GM12878 (cell line): ENCODE measurements at regions of chr6 and their contacts with region 1.

Region 1: DNA sequence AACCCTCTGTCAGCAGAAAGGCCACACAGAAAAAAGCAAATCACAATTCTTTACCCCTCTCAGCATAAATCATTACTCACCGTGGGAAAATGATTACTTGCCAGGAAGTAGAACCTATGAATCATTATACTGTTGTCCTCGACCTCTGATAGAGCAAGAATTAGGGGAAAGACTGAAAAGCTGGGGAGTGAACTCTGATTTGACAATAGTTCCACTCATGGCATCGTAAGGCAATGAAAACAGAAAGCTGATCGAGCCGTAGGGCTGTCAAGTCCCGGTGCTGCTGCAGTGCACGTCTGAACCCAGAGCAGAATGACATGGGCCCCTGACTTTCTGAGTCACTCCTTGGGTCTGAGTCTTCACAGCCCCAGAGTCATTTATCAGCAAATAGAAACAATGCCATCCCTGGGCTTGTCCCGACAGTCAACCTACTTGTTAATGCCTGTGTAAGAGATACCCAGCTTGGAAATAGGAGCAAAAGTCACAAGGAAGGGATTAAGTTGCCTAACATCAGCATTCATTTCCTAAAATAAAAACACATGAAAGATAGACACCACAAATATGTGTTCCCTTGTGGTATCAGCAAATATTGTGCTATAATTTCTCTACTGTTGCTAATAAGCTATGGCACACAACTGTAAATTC is 224.8 kb upstream of the MARCKS start:
- DNase-seq: peak; percentile 91
- ATAC-seq: peak; percentile 54
- H3K4me3 ChIP-seq: peak overlapping the region; percentile 19; the same call in 1 of the 2 replicates
- H3K27ac ChIP-seq: peak overlapping the region; percentile 100
- H3K4me1 ChIP-seq: peaks cover 77% of the 10 kb centered on the region
- H3K27me3 ChIP-seq: no peaks in the 10 kb centered on the region
- CTCF ChIP-seq: no peak
- EP300 ChIP-seq: 0 out of 4 replicates have a peak, but pooled peaks of 1 of the 2 experiments have one; percentile 50
- POLR2A ChIP-seq: peak; percentile 88
- RAD21 ChIP-seq: 0 out of 2 replicates have a peak, but pooled peaks have one; percentile 1

Region 2: GRCh38 chr6:111727802-111728201 is 1904.5 kb before region 1 on chr6:
- CTCF ChIA-PET with region 1: no interaction called
- POLR2A ChIA-PET with region 1: no interaction called
- RAD21 ChIA-PET with region 1: no interaction called
- SMC1A ChIA-PET with region 1: no interaction called
- in situ Hi-C with region 1: loop called (anchors 25 kb)
- intact Hi-C with region 1: no loop called
- DNase-seq: no peak
- ATAC-seq: no peak
- H3K4me3 ChIP-seq: no peak overlapping the region
- H3K27ac ChIP-seq: no peak overlapping the region
- H3K4me1 ChIP-seq: peaks cover 48% of the 10 kb centered on the region
- H3K27me3 ChIP-seq: no peaks in the 10 kb centered on the region
- CTCF ChIP-seq: peak in 2 of 3 experiments; percentile 11 to 38; a peak in 1 of 6 replicates
- EP300 ChIP-seq: no peak
- POLR2A ChIP-seq: no peak
- RAD21 ChIP-seq: no peak

Region 3: DNA sequence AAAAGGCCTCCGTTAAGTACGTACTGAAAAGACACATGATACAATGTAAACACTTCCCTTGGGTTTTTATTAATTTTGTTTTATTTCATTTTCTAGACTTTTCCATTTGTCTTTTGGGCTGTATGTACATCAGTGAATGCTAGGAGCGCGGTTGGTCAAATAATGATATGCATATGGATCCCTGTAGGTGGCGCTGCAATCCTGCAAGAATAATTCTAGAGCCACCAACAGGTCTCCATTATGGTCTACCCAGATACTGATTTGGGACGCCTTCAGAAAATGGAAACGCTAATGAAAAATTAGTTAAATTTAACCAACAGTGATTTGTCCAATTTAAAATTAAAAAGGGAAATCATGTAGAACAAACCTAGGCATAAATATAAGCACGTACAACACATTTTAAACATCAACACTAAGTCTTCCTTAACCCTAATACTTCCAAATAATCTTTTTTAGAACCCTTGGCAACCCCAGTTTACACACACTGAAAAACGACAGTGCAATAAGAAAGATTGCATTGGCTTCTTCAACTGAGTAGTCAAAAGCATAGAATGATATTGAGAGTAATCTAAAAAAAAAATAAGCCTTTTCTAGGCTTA is 851.7 kb before region 1 on chr6:
- CTCF ChIA-PET with region 1: no interaction called
- POLR2A ChIA-PET with region 1: no interaction called
- RAD21 ChIA-PET with region 1: no interaction called
- SMC1A ChIA-PET with region 1: interaction called, 3 read pairs
- in situ Hi-C with region 1: no loop called
- intact Hi-C with region 1: loop called (anchors 2 kb)
- DNase-seq: peak; percentile 24
- ATAC-seq: peak; percentile 99
- H3K4me3 ChIP-seq: no peak overlapping the region
- H3K27ac ChIP-seq: no peak overlapping the region
- H3K4me1 ChIP-seq: no peaks in the 10 kb centered on the region
- H3K27me3 ChIP-seq: no peaks in the 10 kb centered on the region
- CTCF ChIP-seq: peak; percentile 67 to 82 (median 69)
- EP300 ChIP-seq: no peak
- POLR2A ChIP-seq: no peak
- RAD21 ChIP-seq: peak; percentile 95

Region 4: DNA sequence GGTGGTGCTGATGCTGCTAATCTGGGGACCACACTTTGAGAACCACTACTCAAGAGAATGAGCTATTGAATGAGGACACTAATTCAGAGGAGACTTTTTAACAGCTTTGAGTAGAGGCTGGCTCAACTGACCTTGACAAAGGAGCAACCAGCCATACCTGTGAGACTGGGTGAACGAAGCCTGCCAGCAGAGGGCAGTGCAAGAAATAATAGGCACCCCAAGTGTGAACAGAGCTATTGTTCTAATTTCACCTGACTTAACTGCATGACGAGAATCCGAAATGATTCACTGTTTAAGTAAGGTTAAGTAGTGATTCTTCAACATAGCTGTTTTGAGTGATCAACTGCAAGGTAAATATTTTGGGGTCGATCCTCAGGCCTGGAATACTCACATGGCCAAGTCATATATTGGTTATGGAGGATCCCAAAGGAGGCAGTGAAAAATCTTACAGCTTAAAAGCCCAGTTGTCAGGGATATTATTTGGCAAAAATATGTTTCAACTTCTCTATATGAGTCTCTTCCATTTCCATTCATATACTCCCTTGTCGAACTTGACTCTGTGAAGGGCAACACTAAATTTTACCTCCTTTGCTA is 325.7 kb before region 1 on chr6:
- CTCF ChIA-PET with region 1: interaction called, 28 read pairs
- POLR2A ChIA-PET with region 1: no interaction called
- RAD21 ChIA-PET with region 1: interaction called, 31 read pairs
- SMC1A ChIA-PET with region 1: interaction called, 17 read pairs
- in situ Hi-C with region 1: loop called (anchors 5 kb)
- intact Hi-C with region 1: loop called (anchors 2 kb)
- DNase-seq: peak; percentile 57
- ATAC-seq: peak; percentile 100
- H3K4me3 ChIP-seq: no peak overlapping the region
- H3K27ac ChIP-seq: no peak overlapping the region
- H3K4me1 ChIP-seq: no peaks in the 10 kb centered on the region
- H3K27me3 ChIP-seq: no peaks in the 10 kb centered on the region
- CTCF ChIP-seq: peak; percentile 79 to 83 (median 81)
- EP300 ChIP-seq: no peak
- POLR2A ChIP-seq: no peak
- RAD21 ChIP-seq: peak; percentile 81

Region 5: DNA sequence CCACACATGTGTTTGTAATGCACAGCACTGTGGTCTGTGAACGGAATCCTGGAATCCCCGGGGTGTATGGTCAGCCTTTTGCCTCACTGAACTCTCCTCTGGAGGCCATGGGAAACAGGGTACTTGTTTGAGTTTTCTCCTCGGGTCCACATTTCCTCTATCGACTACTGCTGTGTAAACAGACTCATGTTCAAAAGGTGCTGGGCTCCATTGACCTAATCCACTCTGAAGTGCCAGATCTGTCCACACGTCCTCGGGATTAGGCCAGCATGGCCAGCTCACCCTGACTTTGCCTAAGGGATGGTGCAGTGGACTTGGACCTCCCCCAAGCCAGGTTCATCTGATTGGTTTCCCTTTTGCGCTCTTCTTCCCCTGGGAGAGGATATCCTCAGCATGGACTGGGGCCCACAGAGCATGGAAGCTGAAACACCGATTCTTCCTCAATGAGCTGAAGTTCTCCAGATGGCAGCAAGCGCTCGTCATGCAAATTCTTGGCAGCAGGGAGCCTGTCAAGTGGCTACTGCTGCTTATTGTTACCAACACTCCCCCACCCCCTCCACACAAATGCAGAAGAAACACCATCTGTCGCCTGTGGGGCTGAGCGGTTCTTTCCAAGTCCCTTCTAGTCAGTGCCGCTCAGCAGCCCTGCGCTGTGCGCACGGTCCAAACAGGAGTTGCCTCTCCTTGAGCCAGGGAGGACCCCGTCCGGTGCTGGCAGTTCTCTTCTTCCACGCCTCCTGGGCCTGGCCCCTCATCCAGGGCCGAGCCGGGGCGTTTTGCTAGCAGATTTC is 67.8 kb before region 1 on chr6:
- CTCF ChIA-PET with region 1: no interaction called
- POLR2A ChIA-PET with region 1: no interaction called
- RAD21 ChIA-PET with region 1: no interaction called
- SMC1A ChIA-PET with region 1: no interaction called
- in situ Hi-C with region 1: no loop called
- intact Hi-C with region 1: no loop called
- DNase-seq: no peak
- ATAC-seq: peak; percentile 79
- H3K4me3 ChIP-seq: no peak overlapping the region
- H3K27ac ChIP-seq: no peak overlapping the region
- H3K4me1 ChIP-seq: peaks cover 4% of the 10 kb centered on the region
- H3K27me3 ChIP-seq: no peaks in the 10 kb centered on the region
- CTCF ChIP-seq: no peak
- EP300 ChIP-seq: no peak
- POLR2A ChIP-seq: no peak
- RAD21 ChIP-seq: no peak

Region 6: GRCh38 chr6:113586413-113587077 is 45.8 kb before region 1 on chr6:
- CTCF ChIA-PET with region 1: no interaction called
- POLR2A ChIA-PET with region 1: no interaction called
- RAD21 ChIA-PET with region 1: no interaction called
- SMC1A ChIA-PET with region 1: no interaction called
- in situ Hi-C with region 1: no loop called
- intact Hi-C with region 1: no loop called
- DNase-seq: no peak
- ATAC-seq: no peak
- H3K4me3 ChIP-seq: no peak overlapping the region
- H3K27ac ChIP-seq: no peak overlapping the region
- H3K4me1 ChIP-seq: no peaks in the 10 kb centered on the region
- H3K27me3 ChIP-seq: no peaks in the 10 kb centered on the region
- CTCF ChIP-seq: no peak
- EP300 ChIP-seq: no peak
- POLR2A ChIP-seq: no peak
- RAD21 ChIP-seq: no peak

Region 7: GRCh38 chr6:113642714-113643406 is 10.5 kb after region 1 on chr6:
- CTCF ChIA-PET with region 1: interaction called, 146 read pairs
- POLR2A ChIA-PET with region 1: interaction called, 304 read pairs
- RAD21 ChIA-PET with region 1: interaction called, 395 read pairs
- SMC1A ChIA-PET with region 1: interaction called, 489 read pairs
- in situ Hi-C with region 1: no loop called
- intact Hi-C with region 1: loop called (anchors 1 kb)
- DNase-seq: no peak
- ATAC-seq: peak; percentile 81
- H3K4me3 ChIP-seq: peak overlapping the region; percentile 28; the same call in 1 of the 2 replicates
- H3K27ac ChIP-seq: peak overlapping the region; percentile 89
- H3K4me1 ChIP-seq: peaks cover 39% of the 10 kb centered on the region
- H3K27me3 ChIP-seq: no peaks in the 10 kb centered on the region
- CTCF ChIP-seq: no peak
- EP300 ChIP-seq: peak; percentile 83 to 88; a peak in 3 of 4 replicates
- POLR2A ChIP-seq: 0 out of 2 replicates have a peak, but pooled peaks have one; percentile 43
- RAD21 ChIP-seq: peak; percentile 25; the same call in 1 of the 2 replicates

Region 8: DNA sequence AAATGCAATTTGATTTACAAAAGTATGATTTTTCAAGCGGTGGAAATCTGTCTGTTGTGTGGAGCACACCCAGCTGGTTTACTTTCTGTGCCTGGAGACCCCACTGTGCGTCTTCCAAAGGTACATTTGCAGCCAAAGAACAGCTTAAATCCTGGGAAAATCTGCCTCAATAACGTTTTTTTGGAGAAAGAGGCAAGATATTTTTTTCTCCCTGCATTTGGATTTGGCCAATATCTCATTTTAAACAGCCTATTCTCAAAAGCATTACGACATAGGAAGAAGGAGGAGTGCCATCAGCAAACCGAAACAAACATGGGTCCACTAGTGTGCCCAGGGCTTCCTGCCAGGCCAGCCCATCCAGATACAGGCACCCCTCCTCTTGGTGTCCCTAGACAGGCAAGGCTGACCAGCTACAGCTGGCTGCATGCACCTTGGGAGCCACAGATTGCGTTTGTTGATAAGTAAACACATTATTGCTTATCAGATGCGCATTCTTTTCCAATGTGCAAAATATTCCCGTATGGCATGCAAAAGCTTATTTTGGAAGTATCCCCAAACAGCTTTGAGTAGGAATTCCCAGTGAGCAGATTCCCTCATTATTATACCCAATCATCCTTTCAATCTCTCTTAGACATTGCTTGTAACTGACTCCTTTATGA is 40.3 kb after region 1 on chr6:
- CTCF ChIA-PET with region 1: no interaction called
- POLR2A ChIA-PET with region 1: interaction called, 3 read pairs
- RAD21 ChIA-PET with region 1: interaction called, 17 read pairs
- SMC1A ChIA-PET with region 1: interaction called, 14 read pairs
- in situ Hi-C with region 1: no loop called
- intact Hi-C with region 1: no loop called
- DNase-seq: no peak
- ATAC-seq: no peak
- H3K4me3 ChIP-seq: no peak overlapping the region
- H3K27ac ChIP-seq: no peak overlapping the region
- H3K4me1 ChIP-seq: peaks cover 27% of the 10 kb centered on the region
- H3K27me3 ChIP-seq: no peaks in the 10 kb centered on the region
- CTCF ChIP-seq: no peak
- EP300 ChIP-seq: no peak
- POLR2A ChIP-seq: no peak
- RAD21 ChIP-seq: no peak

Region 9: DNA sequence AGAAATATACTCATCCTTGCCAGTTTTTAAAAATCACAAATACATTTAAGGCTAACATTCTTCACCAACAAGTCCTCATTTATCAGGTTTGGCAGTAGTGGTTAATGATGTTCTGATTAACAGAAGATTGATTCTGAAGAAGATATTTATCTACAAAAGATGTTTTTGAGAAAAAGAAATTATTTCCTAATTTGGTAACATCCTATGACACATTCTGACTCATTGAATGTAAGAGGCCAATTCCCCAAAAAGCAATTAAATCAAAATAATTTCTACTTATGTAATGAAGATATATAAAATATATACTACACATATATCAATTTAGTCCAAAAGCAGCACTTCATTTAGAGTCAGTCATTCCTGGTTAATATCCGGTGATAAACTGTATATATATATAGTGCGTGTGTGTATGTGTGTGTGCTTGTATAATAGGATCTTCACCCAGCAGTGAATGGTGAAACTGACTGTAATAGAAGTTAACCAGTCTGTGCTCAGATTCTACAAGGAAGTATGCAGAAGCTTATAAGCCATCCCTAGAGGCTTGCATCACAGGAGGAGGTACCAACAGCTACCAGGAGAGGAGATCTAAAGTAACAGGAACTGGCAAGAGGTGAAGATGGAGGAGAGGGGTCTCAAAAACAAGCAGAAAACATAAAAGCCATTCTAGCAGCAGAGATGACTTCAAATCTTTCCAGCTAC is 141.9 kb after region 1 on chr6:
- CTCF ChIA-PET with region 1: no interaction called
- POLR2A ChIA-PET with region 1: no interaction called
- RAD21 ChIA-PET with region 1: no interaction called
- SMC1A ChIA-PET with region 1: no interaction called
- in situ Hi-C with region 1: no loop called
- intact Hi-C with region 1: no loop called
- DNase-seq: no peak
- ATAC-seq: peak; percentile 46
- H3K4me3 ChIP-seq: no peak overlapping the region
- H3K27ac ChIP-seq: no peak overlapping the region
- H3K4me1 ChIP-seq: no peaks in the 10 kb centered on the region
- H3K27me3 ChIP-seq: no peaks in the 10 kb centered on the region
- CTCF ChIP-seq: no peak
- EP300 ChIP-seq: no peak
- POLR2A ChIP-seq: no peak
- RAD21 ChIP-seq: no peak

Region 10: GRCh38 chr6:113858480-113859348 is 226.4 kb after region 1 on chr6:
- CTCF ChIA-PET with region 1: interaction called, 62 read pairs
- POLR2A ChIA-PET with region 1: interaction called, 50 read pairs
- RAD21 ChIA-PET with region 1: interaction called, 142 read pairs
- SMC1A ChIA-PET with region 1: interaction called, 41 read pairs
- in situ Hi-C with region 1: loop called (anchors 5 kb)
- intact Hi-C with region 1: loop called (anchors 1 kb)
- DNase-seq: peak; percentile 87
- ATAC-seq: peak; percentile 83
- H3K4me3 ChIP-seq: peak overlapping the region; percentile 90
- H3K27ac ChIP-seq: peak overlapping the region; percentile 94
- H3K4me1 ChIP-seq: peaks cover 5% of the 10 kb centered on the region
- H3K27me3 ChIP-seq: no peaks in the 10 kb centered on the region
- CTCF ChIP-seq: peak; percentile 83 to 89 (median 88)
- EP300 ChIP-seq: peak; percentile 69 to 77; a peak in 3 of 4 replicates
- POLR2A ChIP-seq: peak; percentile 95
- RAD21 ChIP-seq: peak; percentile 86